ENCODE measurements at regions of chr1 and their contacts with region 1.

Region 1: GRCh38 chr1:214123061-214123784 is 135.4 kb downstream of the PROX1 start:
- DNase-seq: peak; percentile 67 to 75
- H3K4me3 ChIP-seq: no peak overlapping the region
- H3K4me3 Mint-ChIP-seq: no peak overlapping the region
- H3K27ac Mint-ChIP-seq: peak overlapping the region; percentile 8
- H3K4me1 ChIP-seq: peaks cover 18% of the 10 kb centered on the region; the same call in 1 of the 2 replicates
- H3K4me1 Mint-ChIP-seq: peaks cover 17% of the 10 kb centered on the region
- H3K27me3 ChIP-seq: no peaks in the 10 kb centered on the region
- H3K27me3 Mint-ChIP-seq: no peaks in the 10 kb centered on the region
- CTCF ChIP-seq: peak; percentile 69 to 78

Region 2: DNA sequence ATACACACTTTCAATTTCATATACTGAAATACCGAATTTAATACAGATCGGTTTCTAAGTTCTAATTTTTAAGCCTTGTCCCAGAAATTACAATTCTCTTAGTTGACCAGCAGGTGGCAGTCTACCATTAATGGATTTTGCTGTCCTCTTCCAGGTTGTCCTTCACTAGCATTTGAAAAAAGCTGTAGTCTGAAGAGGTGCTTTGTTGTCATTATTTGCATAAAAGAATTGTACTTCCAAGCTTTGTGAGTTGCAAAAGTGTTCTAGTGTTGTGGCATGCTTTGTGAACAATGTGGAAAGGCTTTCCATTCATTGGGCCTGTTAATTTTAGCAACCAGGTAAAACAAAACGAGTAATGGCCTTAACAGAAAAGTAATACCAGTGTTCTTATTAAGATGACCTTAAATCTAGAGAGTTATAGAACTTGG is 878.5 kb before region 1 on chr1:
- CTCF ChIA-PET with region 1: interaction called, 14 read pairs
- POLR2A ChIA-PET with region 1: no interaction called
- intact Hi-C with region 1: loop called (anchors 1 kb)
- DNase-seq: peak in 1 of 2 experiments; percentile 67
- H3K4me3 ChIP-seq: no peak overlapping the region
- H3K4me3 Mint-ChIP-seq: no peak overlapping the region
- H3K27ac Mint-ChIP-seq: peak overlapping the region; percentile 50
- H3K4me1 ChIP-seq: peaks cover 15% of the 10 kb centered on the region
- H3K4me1 Mint-ChIP-seq: peaks cover 27% of the 10 kb centered on the region
- H3K27me3 ChIP-seq: no peaks in the 10 kb centered on the region
- H3K27me3 Mint-ChIP-seq: no peaks in the 10 kb centered on the region
- CTCF ChIP-seq: peak; percentile 76 to 78

Region 3: DNA sequence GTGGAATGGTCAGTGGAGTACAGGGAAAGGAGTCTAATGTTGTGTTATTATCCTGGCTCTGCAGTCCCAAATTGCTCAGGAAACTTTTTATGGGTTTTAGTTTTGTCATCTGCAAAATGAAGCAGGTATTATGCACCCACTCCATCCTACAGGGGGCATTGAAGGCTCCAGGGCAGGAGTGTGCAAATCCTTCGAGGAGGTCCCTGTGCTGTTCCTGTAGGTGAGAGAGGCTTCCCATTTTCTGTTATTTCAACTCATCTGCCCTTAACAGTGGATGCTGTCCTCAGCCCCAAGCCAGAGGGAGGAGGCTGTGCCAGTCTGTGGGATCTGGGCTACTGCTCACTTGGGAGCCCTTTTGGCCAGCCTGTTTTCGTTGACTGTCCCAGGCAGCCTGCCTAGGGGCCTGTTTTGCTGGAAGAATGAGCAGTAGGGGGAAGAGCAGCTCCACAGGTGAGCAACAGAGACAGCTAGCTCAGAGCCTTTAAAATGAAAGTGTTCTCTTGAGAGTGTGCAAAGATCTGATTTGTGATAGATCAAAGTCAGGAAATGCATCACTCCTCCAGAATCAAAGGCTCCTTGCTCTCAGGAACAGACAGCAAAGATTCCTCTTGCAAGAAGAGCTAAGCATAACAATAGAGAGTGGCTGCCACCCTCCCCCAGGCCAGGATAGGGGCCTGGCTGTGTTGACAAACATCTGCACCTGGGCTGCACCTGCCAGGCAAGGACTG is 453.1 kb before region 1 on chr1:
- CTCF ChIA-PET with region 1: no interaction called
- POLR2A ChIA-PET with region 1: no interaction called
- intact Hi-C with region 1: loop called (anchors 5 kb)
- DNase-seq: peak; percentile 56 to 67
- H3K4me3 ChIP-seq: no peak overlapping the region
- H3K4me3 Mint-ChIP-seq: no peak overlapping the region
- H3K27ac Mint-ChIP-seq: no peak overlapping the region
- H3K4me1 ChIP-seq: peaks cover 11% of the 10 kb centered on the region
- H3K4me1 Mint-ChIP-seq: peaks cover 12% of the 10 kb centered on the region
- H3K27me3 ChIP-seq: no peaks in the 10 kb centered on the region
- H3K27me3 Mint-ChIP-seq: no peaks in the 10 kb centered on the region
- CTCF ChIP-seq: peak; percentile 9 to 21

Region 4: GRCh38 chr1:213829780-213830179 is 293.4 kb before region 1 on chr1:
- CTCF ChIA-PET with region 1: no interaction called
- POLR2A ChIA-PET with region 1: no interaction called
- intact Hi-C with region 1: no loop called
- DNase-seq: no peak
- H3K4me3 ChIP-seq: no peak overlapping the region
- H3K4me3 Mint-ChIP-seq: no peak overlapping the region
- H3K27ac Mint-ChIP-seq: no peak overlapping the region
- H3K4me1 ChIP-seq: no peaks in the 10 kb centered on the region
- H3K4me1 Mint-ChIP-seq: no peaks in the 10 kb centered on the region
- H3K27me3 ChIP-seq: no peaks in the 10 kb centered on the region
- H3K27me3 Mint-ChIP-seq: no peaks in the 10 kb centered on the region
- CTCF ChIP-seq: no peak

Region 5: DNA sequence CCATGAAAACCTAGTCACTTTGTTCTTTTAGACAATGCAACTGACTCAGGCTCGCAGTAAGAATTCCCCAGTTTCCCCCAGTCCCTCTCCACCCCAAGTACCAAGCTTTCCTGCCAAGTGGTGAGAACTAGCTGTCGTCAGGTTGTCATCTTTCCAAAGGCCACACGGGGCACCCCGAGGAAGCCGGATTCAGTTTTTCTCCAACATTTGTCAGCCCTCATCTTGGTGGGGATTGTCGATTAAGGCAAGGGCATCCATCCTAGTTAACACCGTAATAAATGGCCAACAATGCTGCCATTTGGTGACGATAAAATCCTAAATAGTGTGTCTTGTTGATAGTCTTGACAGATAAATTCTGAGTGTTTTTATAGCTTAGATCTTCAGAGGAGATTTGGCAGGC is 191.4 kb before region 1 on chr1:
- CTCF ChIA-PET with region 1: no interaction called
- POLR2A ChIA-PET with region 1: no interaction called
- intact Hi-C with region 1: loop called (anchors 2 kb)
- DNase-seq: peak in 1 of 2 experiments; percentile 46
- H3K4me3 ChIP-seq: no peak overlapping the region
- H3K4me3 Mint-ChIP-seq: no peak overlapping the region
- H3K27ac Mint-ChIP-seq: no peak overlapping the region
- H3K4me1 ChIP-seq: no peaks in the 10 kb centered on the region
- H3K4me1 Mint-ChIP-seq: no peaks in the 10 kb centered on the region
- H3K27me3 ChIP-seq: no peaks in the 10 kb centered on the region
- H3K27me3 Mint-ChIP-seq: no peaks in the 10 kb centered on the region
- CTCF ChIP-seq: peak; percentile 43 to 55

Region 6: DNA sequence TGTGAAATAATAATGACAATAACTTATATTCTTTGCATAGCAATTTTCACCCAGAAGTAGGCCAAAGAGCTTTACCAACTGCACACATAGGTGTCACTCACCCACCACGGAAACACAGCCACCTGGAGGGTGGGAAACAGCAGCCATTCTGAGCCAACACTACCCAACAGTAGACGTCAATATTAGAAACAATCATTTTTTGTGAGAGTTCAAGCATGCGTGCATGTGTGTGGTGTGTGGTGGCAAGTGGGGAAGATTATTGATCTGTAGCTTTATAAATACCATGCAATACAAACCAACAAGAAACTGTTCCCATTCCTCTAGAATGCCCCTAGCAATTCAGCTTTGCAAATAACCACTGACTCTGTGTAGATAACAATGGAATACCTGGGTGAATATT is 116.4 kb before region 1 on chr1:
- CTCF ChIA-PET with region 1: interaction called, 4 read pairs
- POLR2A ChIA-PET with region 1: no interaction called
- intact Hi-C with region 1: loop called (anchors 1 kb)
- DNase-seq: no peak
- H3K4me3 ChIP-seq: no peak overlapping the region
- H3K4me3 Mint-ChIP-seq: no peak overlapping the region
- H3K27ac Mint-ChIP-seq: no peak overlapping the region
- H3K4me1 ChIP-seq: no peaks in the 10 kb centered on the region
- H3K4me1 Mint-ChIP-seq: peaks cover 7% of the 10 kb centered on the region
- H3K27me3 ChIP-seq: no peaks in the 10 kb centered on the region
- H3K27me3 Mint-ChIP-seq: no peaks in the 10 kb centered on the region
- CTCF ChIP-seq: no peak